CD4-positive, alpha-beta memory T cell (primary cell): ENCODE measurements at regions of chr1 and their contacts with region 1.

Region 1: GRCh38 chr1:227762233-227762911 is 27.1 kb downstream of the SNAP47 start:
- DNase-seq: peak; percentile 87 to 92 (median 88)
- H3K4me3 ChIP-seq: peak overlapping the region; percentile 20 to 41
- H3K4me3 Mint-ChIP-seq: peak overlapping the region; percentile 60 to 89 (median 76)
- H3K27ac ChIP-seq: peak overlapping the region; percentile 46
- H3K27ac Mint-ChIP-seq: peak overlapping the region; percentile 89 to 95 (median 92)
- H3K4me1 ChIP-seq: peaks cover 89% of the 10 kb centered on the region
- H3K4me1 Mint-ChIP-seq: peaks cover 66 to 97% (median 77%) of the 10 kb centered on the region in 4 donors
- H3K27me3 ChIP-seq: no peaks in the 10 kb centered on the region
- H3K27me3 Mint-ChIP-seq: no peaks in the 10 kb centered on the region

Region 2: DNA sequence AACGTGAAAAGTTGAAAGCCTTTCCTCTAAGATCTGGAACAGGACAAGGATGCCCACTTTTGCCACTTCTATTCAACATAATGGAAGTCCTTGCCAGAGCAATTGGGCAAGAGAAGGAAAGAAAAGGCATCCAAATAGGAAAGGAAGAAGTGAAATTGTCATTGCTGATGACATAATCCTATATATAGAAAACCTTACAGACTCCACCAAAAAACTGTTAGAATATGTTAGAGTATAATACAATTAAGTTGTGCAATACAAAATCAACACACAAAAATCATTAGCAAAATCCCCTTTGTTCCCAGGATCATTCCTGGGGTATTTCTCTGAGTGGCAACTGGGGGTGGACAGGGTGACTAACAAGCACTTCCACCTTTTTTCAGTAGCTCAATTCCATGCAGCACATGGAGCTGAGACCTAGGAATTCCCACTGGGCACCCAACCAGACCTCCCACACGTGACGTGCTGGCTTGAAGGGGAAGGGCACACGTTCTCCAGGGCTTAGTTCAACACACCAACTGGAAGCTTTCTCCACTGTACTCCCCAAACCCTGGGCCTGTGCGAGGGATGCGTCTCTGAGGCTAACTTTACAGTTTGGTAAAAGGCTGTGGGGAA is 1204.2 kb before region 1 on chr1:
- CTCF ChIA-PET with region 1: no interaction called
- POLR2A ChIA-PET with region 1: no interaction called
- intact Hi-C with region 1: no loop called
- DNase-seq: no peak
- H3K4me3 ChIP-seq: no peak overlapping the region
- H3K4me3 Mint-ChIP-seq: no peak overlapping the region
- H3K27ac ChIP-seq: no peak overlapping the region
- H3K27ac Mint-ChIP-seq: no peak overlapping the region
- H3K4me1 ChIP-seq: no peaks in the 10 kb centered on the region
- H3K4me1 Mint-ChIP-seq: no peaks in the 10 kb centered on the region
- H3K27me3 ChIP-seq: peaks cover 10% of the 10 kb centered on the region
- H3K27me3 Mint-ChIP-seq: peaks cover 28 to 34% of the 10 kb centered on the region in 2 donors

Region 3: GRCh38 chr1:227734856-227735538 is 27.4 kb before region 1 on chr1 and contains the starts of genes JMJD4 and SNAP47:
- CTCF ChIA-PET with region 1: interaction called, 5 read pairs
- POLR2A ChIA-PET with region 1: interaction called, 17 read pairs
- intact Hi-C with region 1: no loop called
- DNase-seq: peak; percentile 88 to 97 (median 93)
- H3K4me3 ChIP-seq: peak within 1 kb of the TSS; percentile 69 to 80
- H3K4me3 Mint-ChIP-seq: peak within 1 kb of the TSS; percentile 89 to 93 (median 90)
- H3K27ac ChIP-seq: peak within 1 kb of the TSS; percentile 84
- H3K27ac Mint-ChIP-seq: peak within 1 kb of the TSS; percentile 88 to 94 (median 90)
- H3K4me1 ChIP-seq: peaks cover 39% of the 10 kb centered on the region
- H3K4me1 Mint-ChIP-seq: peaks cover 26 to 65% (median 39%) of the 10 kb centered on the region in 4 donors
- H3K27me3 ChIP-seq: no peaks in the 10 kb centered on the region
- H3K27me3 Mint-ChIP-seq: peaks cover 0 to 1% of the 10 kb centered on the region in 2 donors
- total RNA-seq, gene JMJD4: 32.4 to 34.1 TPM
- total RNA-seq, gene SNAP47: 27.0 to 30.5 TPM

Region 4: GRCh38 chr1:227787513-227788270 is 25.3 kb after region 1 on chr1:
- CTCF ChIA-PET with region 1: interaction called, 43 read pairs
- POLR2A ChIA-PET with region 1: interaction called, 61 read pairs
- intact Hi-C with region 1: loop called (anchors 1 kb)
- DNase-seq: peak; percentile 91 to 96 (median 93)
- H3K4me3 ChIP-seq: peak overlapping the region; percentile 69 to 89
- H3K4me3 Mint-ChIP-seq: peak overlapping the region; percentile 83 to 89 (median 84)
- H3K27ac ChIP-seq: peak overlapping the region; percentile 53
- H3K27ac Mint-ChIP-seq: peak overlapping the region; percentile 57 to 86 (median 83)
- H3K4me1 ChIP-seq: peaks cover 28% of the 10 kb centered on the region
- H3K4me1 Mint-ChIP-seq: peaks cover 13 to 46% (median 22%) of the 10 kb centered on the region in 4 donors
- H3K27me3 ChIP-seq: no peaks in the 10 kb centered on the region
- H3K27me3 Mint-ChIP-seq: no peaks in the 10 kb centered on the region

Region 5: DNA sequence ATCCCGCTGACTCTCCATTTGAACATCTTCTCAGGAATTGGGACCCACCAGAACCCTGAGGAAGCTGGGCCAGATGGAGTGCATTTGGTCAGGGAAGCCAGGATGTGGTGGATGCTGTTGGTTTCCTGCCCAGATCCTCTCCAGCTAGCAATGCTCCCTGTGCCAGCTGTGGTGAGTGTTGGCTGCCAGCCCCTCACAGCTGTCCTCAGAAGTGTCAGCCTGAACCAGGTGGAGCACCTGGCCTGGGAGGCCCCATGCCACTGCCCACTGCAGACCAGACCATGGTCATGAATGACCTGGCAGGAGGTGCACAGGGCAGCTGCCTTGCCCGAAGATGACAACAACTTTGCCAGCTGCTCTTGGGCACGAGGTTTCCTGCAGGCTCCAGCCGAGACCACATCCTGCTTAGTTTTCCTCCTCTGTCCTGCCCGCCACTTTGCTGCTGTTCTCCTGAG is 107.5 kb after region 1 on chr1:
- CTCF ChIA-PET with region 1: interaction called, 7 read pairs
- POLR2A ChIA-PET with region 1: interaction called, 12 read pairs
- intact Hi-C with region 1: no loop called
- DNase-seq: peak in 3 of 5 donors; percentile 22 to 31 (median 24)
- H3K4me3 ChIP-seq: peak overlapping the region in 1 of 2 donors; percentile 27
- H3K4me3 Mint-ChIP-seq: peak overlapping the region; percentile 63 to 91 (median 81)
- H3K27ac ChIP-seq: no peak overlapping the region
- H3K27ac Mint-ChIP-seq: peak overlapping the region; percentile 34 to 95 (median 85)
- H3K4me1 ChIP-seq: peaks cover 36% of the 10 kb centered on the region
- H3K4me1 Mint-ChIP-seq: peaks cover 35 to 70% (median 41%) of the 10 kb centered on the region in 4 donors
- H3K27me3 ChIP-seq: no peaks in the 10 kb centered on the region
- H3K27me3 Mint-ChIP-seq: peaks cover 0 to 2% of the 10 kb centered on the region in 2 donors

Region 6: DNA sequence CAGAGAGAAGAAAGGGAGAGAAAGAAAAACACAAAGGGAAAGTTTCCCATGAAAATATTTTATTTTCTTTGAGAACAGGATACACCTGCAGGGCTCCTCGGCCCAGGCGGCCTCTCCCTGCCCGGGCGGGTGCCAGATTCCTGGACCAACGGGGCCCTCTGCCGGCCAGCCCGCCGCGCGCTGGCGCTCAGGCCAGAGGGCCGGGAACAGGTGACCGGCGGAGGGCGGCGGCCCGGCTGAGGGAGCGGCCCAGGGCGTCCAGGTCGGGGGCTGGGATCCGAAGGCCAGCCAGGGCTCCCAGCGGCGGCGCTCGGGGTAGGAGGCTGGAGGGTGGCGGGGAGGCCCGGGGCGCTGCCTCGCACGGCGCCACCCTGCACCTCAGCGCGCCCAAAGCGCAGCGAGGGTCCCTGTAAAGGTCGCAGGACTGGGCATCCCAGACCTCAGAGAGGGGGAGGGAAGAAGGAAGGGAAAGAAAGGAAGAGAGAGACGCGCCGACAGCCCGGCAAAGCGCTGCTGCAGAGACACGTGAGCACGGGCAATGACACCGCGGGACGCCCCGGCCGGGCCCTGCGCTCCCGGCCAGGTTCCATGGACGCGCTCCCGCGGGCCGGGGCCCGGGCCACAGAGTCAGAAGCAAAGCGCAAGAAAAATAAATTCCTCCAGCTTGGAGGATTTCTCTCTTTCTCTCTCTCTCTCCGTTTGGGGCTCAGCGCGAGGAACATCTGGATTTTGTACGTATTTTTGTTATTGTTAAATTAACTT is 184.4 kb after region 1 on chr1:
- CTCF ChIA-PET with region 1: interaction called, 206 read pairs
- POLR2A ChIA-PET with region 1: interaction called, 27 read pairs
- intact Hi-C with region 1: loop called (anchors 1 kb)
- DNase-seq: peak; percentile 36 to 63 (median 50)
- H3K4me3 ChIP-seq: peak overlapping the region; percentile 29 to 43
- H3K4me3 Mint-ChIP-seq: peak overlapping the region; percentile 75 to 84 (median 77)
- H3K27ac ChIP-seq: no peak overlapping the region
- H3K27ac Mint-ChIP-seq: no peak overlapping the region
- H3K4me1 ChIP-seq: peaks cover 18% of the 10 kb centered on the region
- H3K4me1 Mint-ChIP-seq: peaks cover 2 to 14% (median 8%) of the 10 kb centered on the region in 4 donors
- H3K27me3 ChIP-seq: peaks cover 6% of the 10 kb centered on the region
- H3K27me3 Mint-ChIP-seq: peaks cover 3 to 10% of the 10 kb centered on the region in 2 donors

Region 7: GRCh38 chr1:228082135-228082891 is 319.9 kb after region 1 on chr1 and contains the start of gene ARF1:
- CTCF ChIA-PET with region 1: interaction called, 3 read pairs
- POLR2A ChIA-PET with region 1: interaction called, 3 read pairs
- intact Hi-C with region 1: loop called (anchors 10 kb)
- DNase-seq: peak; percentile 88 to 97 (median 95)
- H3K4me3 ChIP-seq: peak within 1 kb of the TSS; percentile 80 to 97
- H3K4me3 Mint-ChIP-seq: peak within 1 kb of the TSS; percentile 90 to 96 (median 94)
- H3K27ac ChIP-seq: peak within 1 kb of the TSS; percentile 97
- H3K27ac Mint-ChIP-seq: peak within 1 kb of the TSS; percentile 95 to 99 (median 97)
- H3K4me1 ChIP-seq: peaks cover 53% of the 10 kb centered on the region
- H3K4me1 Mint-ChIP-seq: peaks cover 35 to 56% (median 45%) of the 10 kb centered on the region in 4 donors
- H3K27me3 ChIP-seq: no peaks in the 10 kb centered on the region
- H3K27me3 Mint-ChIP-seq: no peaks in the 10 kb centered on the region
- total RNA-seq, gene ARF1: 265 to 270 TPM